HCT116 (cell line): ENCODE measurements at regions of chr10 and their contacts with region 1.

Region 1: DNA sequence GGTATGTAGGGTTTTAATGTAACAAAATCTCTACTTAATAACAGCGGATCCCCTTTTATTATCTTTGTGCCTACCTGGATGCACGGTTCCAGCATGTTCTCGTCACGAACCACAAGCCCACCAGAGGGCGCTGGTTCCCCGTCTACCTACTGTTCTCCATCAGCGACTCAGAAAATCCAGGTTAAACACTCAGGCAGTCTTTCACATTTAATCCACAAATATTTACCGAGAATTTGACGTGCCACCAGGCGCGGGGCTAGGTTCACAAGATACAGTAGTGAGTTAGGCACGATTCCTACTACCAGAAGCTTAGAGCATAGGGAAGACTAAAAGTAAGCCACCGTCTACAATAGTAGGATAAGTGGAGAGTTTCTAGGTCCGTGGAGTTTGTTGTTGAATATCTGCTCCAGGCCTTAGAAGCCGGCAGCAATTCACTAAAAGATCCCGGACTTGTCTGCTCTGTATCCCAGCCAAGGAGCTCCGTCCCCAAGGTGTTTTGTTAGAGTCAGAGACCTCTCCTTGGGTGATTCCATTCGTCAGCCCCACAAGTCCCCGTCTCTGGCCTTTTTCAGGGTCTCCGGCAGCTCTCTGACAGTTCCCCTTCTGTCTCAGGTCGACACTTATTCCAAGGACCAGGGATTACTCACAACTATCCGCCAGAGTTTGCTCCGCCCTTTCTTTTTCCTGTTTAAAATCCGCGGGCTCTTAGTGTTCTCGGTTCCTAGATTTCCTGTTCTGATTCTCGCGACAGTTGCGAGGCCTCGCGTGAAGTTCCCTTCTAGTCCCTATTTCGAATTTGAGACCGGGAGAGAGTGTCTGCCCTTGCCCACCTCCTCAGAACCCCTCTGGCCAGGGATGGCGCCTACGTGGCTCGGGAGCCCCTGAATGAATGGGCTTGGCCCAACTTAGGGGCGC is 1.5 kb upstream of the KAZALD1 start:
- DNase-seq: peak; percentile 98
- ATAC-seq: peak; percentile 67
- H3K4me3 ChIP-seq: peak overlapping the region; percentile 80 to 84
- H3K27ac ChIP-seq: peak overlapping the region; percentile 99
- H3K4me1 ChIP-seq: peaks cover 42 to 51% of the 10 kb centered on the region in 2 experiments
- H3K27me3 ChIP-seq: no peaks in the 10 kb centered on the region
- CTCF ChIP-seq: peak in 2 of 3 experiments; percentile 98 to 99; a peak in 4 of 6 replicates
- POLR2A ChIP-seq: peak; percentile 37
- RAD21 ChIP-seq: no peak

Region 2: GRCh38 chr10:100791369-100792058 is 268.8 kb before region 1 on chr10:
- CTCF ChIA-PET with region 1: no interaction called
- POLR2A ChIA-PET with region 1: no interaction called
- RAD21 ChIA-PET with region 1: no interaction called
- intact Hi-C with region 1: no loop called
- DNase-seq: no peak
- ATAC-seq: no peak
- H3K4me3 ChIP-seq: no peak overlapping the region
- H3K27ac ChIP-seq: no peak overlapping the region
- H3K4me1 ChIP-seq: no peaks in the 10 kb centered on the region
- H3K27me3 ChIP-seq: no peaks in the 10 kb centered on the region
- CTCF ChIP-seq: no peak
- POLR2A ChIP-seq: no peak
- RAD21 ChIP-seq: no peak

Region 3: GRCh38 chr10:100803492-100803891 is 256.8 kb before region 1 on chr10:
- CTCF ChIA-PET with region 1: no interaction called
- POLR2A ChIA-PET with region 1: no interaction called
- RAD21 ChIA-PET with region 1: no interaction called
- intact Hi-C with region 1: no loop called
- DNase-seq: no peak
- ATAC-seq: no peak
- H3K4me3 ChIP-seq: no peak overlapping the region
- H3K27ac ChIP-seq: no peak overlapping the region
- H3K4me1 ChIP-seq: no peaks in the 10 kb centered on the region
- H3K27me3 ChIP-seq: no peaks in the 10 kb centered on the region
- CTCF ChIP-seq: no peak
- POLR2A ChIP-seq: no peak
- RAD21 ChIP-seq: no peak

Region 4: DNA sequence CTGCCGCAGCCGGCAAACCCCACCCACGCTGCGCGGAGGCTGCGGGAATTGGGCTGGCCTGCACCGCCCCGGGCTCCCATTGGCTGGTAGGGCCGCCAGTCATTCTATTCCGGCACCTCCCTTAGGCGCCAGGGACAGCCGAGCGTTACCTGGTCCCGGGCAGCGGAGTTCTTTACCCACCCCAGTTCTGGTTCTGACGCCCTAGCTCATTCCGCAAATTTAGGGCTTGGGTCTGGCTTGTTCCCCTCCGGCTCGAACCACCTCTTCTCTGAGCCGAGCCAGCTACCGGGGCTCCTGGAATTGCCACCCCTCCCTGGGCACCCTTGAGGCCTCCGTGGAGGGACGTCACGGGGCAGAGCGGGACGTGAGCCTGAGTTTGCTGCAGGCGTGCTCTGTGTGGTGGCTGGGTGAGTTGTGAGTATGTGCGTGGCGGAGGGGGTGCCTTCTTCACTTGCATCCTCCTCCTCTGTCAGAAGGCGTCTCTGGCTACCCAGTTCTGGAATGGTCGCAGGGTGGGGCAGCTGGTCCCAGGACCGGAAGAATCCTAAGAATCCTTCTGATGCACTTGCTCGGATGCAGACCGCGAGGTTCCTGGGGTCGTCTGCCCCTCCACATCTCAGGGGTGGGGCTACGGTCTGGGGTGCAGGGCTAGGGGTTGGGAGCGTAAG is 29.0 kb before region 1 on chr10 and contains the starts of genes PDZD7 and SFXN3:
- CTCF ChIA-PET with region 1: interaction called, 11 read pairs
- POLR2A ChIA-PET with region 1: interaction called, 8 read pairs
- RAD21 ChIA-PET with region 1: no interaction called
- intact Hi-C with region 1: no loop called
- DNase-seq: peak; percentile 94
- ATAC-seq: peak; percentile 87
- H3K4me3 ChIP-seq: peak within 1 kb of the TSS; percentile 67 to 87
- H3K27ac ChIP-seq: peak within 1 kb of the TSS; percentile 81
- H3K4me1 ChIP-seq: peaks cover 32 to 56% of the 10 kb centered on the region in 2 experiments
- H3K27me3 ChIP-seq: no peaks in the 10 kb centered on the region
- CTCF ChIP-seq: no peak
- POLR2A ChIP-seq: no peak
- RAD21 ChIP-seq: no peak
- total RNA-seq, gene PDZD7: 6.1 TPM
- total RNA-seq, gene SFXN3: 52.5 TPM